MCF 10A (cell line): ENCODE measurements at regions of chr3 and their contacts with region 1.

Region 1: GRCh38 chr3:197749601-197750395 is at the start of gene FYTTD1:
- DNase-seq: peak; percentile 77
- H3K4me3 Mint-ChIP-seq: peak within 1 kb of the TSS; percentile 98
- H3K27ac Mint-ChIP-seq: peak within 1 kb of the TSS; percentile 97
- H3K4me1 Mint-ChIP-seq: peaks cover 27% of the 10 kb centered on the region
- H3K27me3 Mint-ChIP-seq: no peaks in the 10 kb centered on the region
- CTCF ChIP-seq: peak; percentile 16
- total RNA-seq, gene FYTTD1: 45.9 and 46.3 TPM in 2 replicates

Region 2: DNA sequence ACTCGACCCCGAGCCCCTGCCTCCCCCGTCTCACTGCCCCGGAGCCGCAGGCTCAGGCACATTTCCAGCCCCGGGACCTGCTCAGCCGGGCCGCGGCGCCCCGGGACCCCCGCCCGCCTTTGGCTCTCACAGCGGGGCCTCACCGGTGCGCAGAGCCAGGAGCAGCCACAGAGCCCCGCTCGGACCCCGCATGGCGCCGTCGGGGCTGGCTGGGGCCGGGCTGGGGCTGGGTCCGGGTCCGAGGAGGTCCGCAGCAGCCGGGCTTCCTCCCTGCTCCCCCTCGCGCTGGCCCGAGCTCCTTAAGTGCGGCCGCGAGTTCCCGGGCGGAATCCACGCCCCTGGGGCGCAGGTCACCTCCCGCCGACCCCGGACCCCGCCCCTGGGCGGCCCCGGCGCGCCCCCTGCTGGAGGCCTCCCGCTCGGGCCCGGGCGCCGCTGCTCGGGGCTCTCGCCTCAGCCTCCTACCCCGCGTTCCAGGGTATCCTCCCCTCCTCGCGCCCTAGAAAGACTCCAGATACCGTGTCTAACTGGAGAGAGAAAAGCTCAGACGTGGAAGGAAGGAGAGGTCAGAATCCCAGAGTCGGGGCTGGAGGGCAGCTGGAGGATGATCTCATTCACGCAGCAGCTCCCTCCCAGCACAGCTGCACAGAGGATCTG is 720.2 kb before region 1 on chr3 and contains the start of gene MELTF:
- CTCF ChIA-PET with region 1: no interaction called
- POLR2A ChIA-PET with region 1: no interaction called
- intact Hi-C with region 1: no loop called
- DNase-seq: peak; percentile 65
- H3K4me3 Mint-ChIP-seq: peak within 1 kb of the TSS; percentile 75
- H3K27ac Mint-ChIP-seq: no peak within 1 kb of the TSS
- H3K4me1 Mint-ChIP-seq: peaks cover 25% of the 10 kb centered on the region
- H3K27me3 Mint-ChIP-seq: no peaks in the 10 kb centered on the region
- CTCF ChIP-seq: peak; percentile 88
- total RNA-seq, gene MELTF: 9.1 and 20.6 TPM in 2 replicates

Region 3: GRCh38 chr3:197711973-197712707 is 37.7 kb before region 1 on chr3:
- CTCF ChIA-PET with region 1: interaction called, 3 read pairs
- POLR2A ChIA-PET with region 1: interaction called, 63 read pairs
- intact Hi-C with region 1: loop called (anchors 2 kb)
- DNase-seq: peak; percentile 97
- H3K4me3 Mint-ChIP-seq: peak overlapping the region; percentile 82
- H3K27ac Mint-ChIP-seq: peak overlapping the region; percentile 98
- H3K4me1 Mint-ChIP-seq: peaks cover 14% of the 10 kb centered on the region
- H3K27me3 Mint-ChIP-seq: no peaks in the 10 kb centered on the region
- CTCF ChIP-seq: no peak

Region 4: DNA sequence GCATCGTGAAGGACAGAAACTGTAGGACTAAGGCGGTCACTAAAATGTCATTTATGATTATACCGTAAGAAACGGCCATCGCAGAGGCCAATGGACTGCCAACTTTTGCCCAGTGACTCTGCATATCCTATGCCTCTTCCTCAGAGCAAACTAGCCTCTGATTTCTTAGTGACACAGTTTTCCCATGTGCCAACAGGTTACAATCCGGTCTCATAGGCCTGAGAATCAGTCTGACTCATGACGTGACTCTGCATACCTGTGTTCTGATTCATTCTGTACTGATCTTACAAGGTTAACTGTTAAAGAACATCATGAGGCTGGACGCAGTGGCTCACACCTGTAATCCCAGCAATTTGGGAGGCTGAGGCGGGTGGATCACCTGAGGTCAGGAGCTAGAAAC is 30.9 kb before region 1 on chr3:
- CTCF ChIA-PET with region 1: interaction called, 3 read pairs
- POLR2A ChIA-PET with region 1: interaction called, 63 read pairs
- intact Hi-C with region 1: no loop called
- DNase-seq: peak; percentile 95
- H3K4me3 Mint-ChIP-seq: peak overlapping the region; percentile 14
- H3K27ac Mint-ChIP-seq: peak overlapping the region; percentile 94
- H3K4me1 Mint-ChIP-seq: peaks cover 19% of the 10 kb centered on the region
- H3K27me3 Mint-ChIP-seq: no peaks in the 10 kb centered on the region
- CTCF ChIP-seq: no peak

Region 5: GRCh38 chr3:197730200-197730599 is 19.6 kb before region 1 on chr3:
- CTCF ChIA-PET with region 1: interaction called, 4 read pairs
- POLR2A ChIA-PET with region 1: interaction called, 76 read pairs
- intact Hi-C with region 1: loop called (anchors 2 kb)
- DNase-seq: peak; percentile 60
- H3K4me3 Mint-ChIP-seq: no peak overlapping the region
- H3K27ac Mint-ChIP-seq: peak overlapping the region; percentile 91
- H3K4me1 Mint-ChIP-seq: peaks cover 25% of the 10 kb centered on the region
- H3K27me3 Mint-ChIP-seq: no peaks in the 10 kb centered on the region
- CTCF ChIP-seq: no peak

Region 6: GRCh38 chr3:197736491-197737318 is 13.1 kb before region 1 on chr3 and contains the start of gene RUBCN:
- CTCF ChIA-PET with region 1: interaction called, 4 read pairs
- POLR2A ChIA-PET with region 1: interaction called, 76 read pairs
- intact Hi-C with region 1: loop called (anchors 2 kb)
- DNase-seq: peak; percentile 92
- H3K4me3 Mint-ChIP-seq: peak within 1 kb of the TSS; percentile 82
- H3K27ac Mint-ChIP-seq: peak within 1 kb of the TSS; percentile 82
- H3K4me1 Mint-ChIP-seq: peaks cover 20% of the 10 kb centered on the region
- H3K27me3 Mint-ChIP-seq: no peaks in the 10 kb centered on the region
- CTCF ChIP-seq: no peak
- total RNA-seq, gene RUBCN: 29.9 and 35.5 TPM in 2 replicates

Region 7: DNA sequence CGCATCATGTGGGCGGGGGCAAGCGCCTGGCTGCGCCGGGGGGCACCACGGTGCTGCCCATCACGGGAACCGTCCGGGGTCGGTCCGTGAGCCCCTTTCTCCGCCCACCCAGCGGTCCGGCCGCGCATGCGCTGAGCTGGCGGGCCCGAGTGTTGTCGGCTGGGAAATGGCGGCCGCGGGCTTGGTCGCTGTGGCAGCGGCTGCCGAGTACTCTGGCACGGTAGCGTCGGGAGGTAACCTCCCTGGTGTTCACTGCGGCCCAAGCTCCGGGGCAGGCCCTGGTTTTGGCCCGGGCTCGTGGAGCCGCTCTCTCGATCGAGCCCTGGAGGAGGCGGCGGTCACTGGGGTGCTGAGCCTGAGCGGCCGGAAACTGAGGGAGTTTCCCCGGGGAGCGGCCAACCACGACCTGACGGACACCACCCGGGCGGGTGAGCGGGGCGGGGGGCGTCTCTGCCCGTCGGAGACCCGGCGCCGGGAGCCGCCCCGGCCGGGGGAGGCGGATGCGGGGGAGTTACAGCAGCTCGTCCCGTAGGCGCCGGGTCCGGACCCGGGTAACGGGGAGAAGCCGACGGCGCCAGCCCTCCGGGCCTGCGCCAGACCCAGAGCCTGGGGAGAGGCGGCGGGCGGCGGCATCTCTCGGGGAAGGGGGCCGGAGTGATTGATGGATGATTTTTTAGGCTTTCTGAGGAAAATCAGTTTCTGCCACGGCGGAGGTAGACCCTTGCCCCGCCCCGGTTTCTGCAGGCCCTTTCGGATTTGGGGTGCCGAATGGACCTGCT is 41.5 kb after region 1 on chr3 and contains the start of gene LRCH3:
- CTCF ChIA-PET with region 1: interaction called, 7 read pairs
- POLR2A ChIA-PET with region 1: interaction called, 55 read pairs
- intact Hi-C with region 1: no loop called
- DNase-seq: peak; percentile 66
- H3K4me3 Mint-ChIP-seq: peak within 1 kb of the TSS; percentile 87
- H3K27ac Mint-ChIP-seq: peak within 1 kb of the TSS; percentile 90
- H3K4me1 Mint-ChIP-seq: peaks cover 20% of the 10 kb centered on the region
- H3K27me3 Mint-ChIP-seq: no peaks in the 10 kb centered on the region
- CTCF ChIP-seq: no peak
- total RNA-seq, gene LRCH3: 55.3 and 58.8 TPM in 2 replicates

Region 8: DNA sequence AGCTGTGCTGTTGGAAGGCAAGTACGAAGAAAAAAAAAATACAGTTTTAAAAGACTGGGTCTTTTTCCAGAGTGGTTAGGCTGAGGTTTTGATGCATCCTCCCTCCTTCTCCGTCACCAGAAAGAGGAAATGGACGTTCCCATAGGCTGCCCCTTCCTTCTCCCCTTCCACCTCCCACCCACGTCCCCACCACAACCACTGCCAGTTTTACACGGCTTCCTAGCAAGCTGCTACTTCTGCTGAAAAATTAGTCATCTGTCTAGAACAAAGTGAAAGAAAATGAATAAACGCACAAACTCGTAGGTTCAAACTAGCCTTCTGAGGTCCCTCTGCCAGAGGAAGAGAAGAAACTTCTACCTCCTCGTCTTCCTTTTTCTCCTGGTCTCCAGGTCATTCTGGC is 128.6 kb after region 1 on chr3:
- CTCF ChIA-PET with region 1: no interaction called
- POLR2A ChIA-PET with region 1: no interaction called
- intact Hi-C with region 1: no loop called
- DNase-seq: no peak
- H3K4me3 Mint-ChIP-seq: no peak overlapping the region
- H3K27ac Mint-ChIP-seq: no peak overlapping the region
- H3K4me1 Mint-ChIP-seq: no peaks in the 10 kb centered on the region
- H3K27me3 Mint-ChIP-seq: no peaks in the 10 kb centered on the region
- CTCF ChIP-seq: no peak

Region 9: DNA sequence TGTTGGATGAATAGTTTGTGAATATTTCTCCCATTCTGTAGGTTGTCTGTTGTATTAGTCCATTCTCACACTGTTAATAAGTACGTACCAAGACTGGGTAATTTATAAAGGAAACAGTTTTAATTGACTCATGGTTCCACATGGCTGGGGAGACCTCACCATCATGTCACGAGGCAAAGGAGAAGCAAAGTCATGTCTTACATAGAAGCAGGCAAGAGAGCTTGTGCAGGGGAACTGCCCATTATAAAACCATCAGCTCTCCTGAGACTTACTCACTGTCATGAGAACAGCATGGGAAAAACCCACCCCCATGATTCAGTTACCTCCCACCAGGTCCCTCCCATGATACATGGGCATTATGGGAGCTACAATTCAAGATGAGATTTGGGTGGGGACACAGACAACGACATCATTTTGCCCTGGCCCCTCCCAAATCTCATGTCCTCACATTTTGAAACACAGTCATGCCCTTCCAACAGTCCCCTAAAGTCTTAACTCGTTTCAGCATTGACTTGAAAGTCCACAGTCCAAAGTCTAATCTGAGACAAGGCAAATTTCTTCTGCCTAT is 343.4 kb after region 1 on chr3:
- CTCF ChIA-PET with region 1: no interaction called
- POLR2A ChIA-PET with region 1: no interaction called
- intact Hi-C with region 1: no loop called
- DNase-seq: no peak
- H3K4me3 Mint-ChIP-seq: no peak overlapping the region
- H3K27ac Mint-ChIP-seq: no peak overlapping the region
- H3K4me1 Mint-ChIP-seq: no peaks in the 10 kb centered on the region
- H3K27me3 Mint-ChIP-seq: peaks cover 81% of the 10 kb centered on the region
- CTCF ChIP-seq: no peak